ENCODE measurements at regions of chr3 and their contacts with region 1.

Region 1: GRCh38 chr3:33787328-33788009 is 11.0 kb upstream of the PDCD6IP start:
- DNase-seq: peak; percentile 50 to 88 (median 64)
- ATAC-seq: peak; percentile 85
- H3K4me3 ChIP-seq: peak overlapping the region; percentile 13; the same call in 1 of the 2 replicates
- H3K27ac ChIP-seq: no peak overlapping the region
- H3K4me1 ChIP-seq: peaks cover 10 to 37% of the 10 kb centered on the region in 2 experiments
- H3K27me3 ChIP-seq: no peaks in the 10 kb centered on the region
- CTCF ChIP-seq: peak; percentile 90 to 95 (median 91)
- EP300 ChIP-seq: no peak
- POLR2A ChIP-seq: no peak
- RAD21 ChIP-seq: peak; percentile 94 to 95

Region 2: DNA sequence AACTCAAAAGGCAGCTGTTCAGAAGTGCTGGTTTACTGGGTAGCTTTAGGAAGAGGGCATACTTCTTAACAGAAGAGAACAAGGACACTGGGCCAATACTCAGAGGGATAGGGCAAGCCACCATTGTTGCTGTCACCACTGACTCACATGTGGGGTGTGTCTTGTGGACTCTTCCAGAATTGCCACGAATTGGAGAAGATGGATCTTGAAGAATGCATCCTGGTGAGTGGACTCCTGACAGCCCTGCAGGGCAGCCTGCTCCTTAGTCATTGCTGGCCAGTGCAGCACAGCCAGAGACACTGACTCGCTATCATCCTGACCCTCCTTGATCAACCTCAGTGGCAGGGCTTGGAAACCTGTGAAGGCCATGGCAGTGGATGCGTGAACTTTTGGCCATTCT is 409.5 kb before region 1 on chr3:
- CTCF ChIA-PET with region 1: no interaction called
- POLR2A ChIA-PET with region 1: interaction called, 5 read pairs
- in situ Hi-C with region 1: no loop called
- intact Hi-C with region 1: loop called (anchors 2 kb)
- DNase-seq: no peak
- ATAC-seq: peak; percentile 25
- H3K4me3 ChIP-seq: no peak overlapping the region
- H3K27ac ChIP-seq: no peak overlapping the region
- H3K4me1 ChIP-seq: no peaks in the 10 kb centered on the region; a peak in 2 of 5 replicates
- H3K27me3 ChIP-seq: no peaks in the 10 kb centered on the region
- CTCF ChIP-seq: no peak
- EP300 ChIP-seq: no peak
- POLR2A ChIP-seq: no peak
- RAD21 ChIP-seq: no peak

Region 3: DNA sequence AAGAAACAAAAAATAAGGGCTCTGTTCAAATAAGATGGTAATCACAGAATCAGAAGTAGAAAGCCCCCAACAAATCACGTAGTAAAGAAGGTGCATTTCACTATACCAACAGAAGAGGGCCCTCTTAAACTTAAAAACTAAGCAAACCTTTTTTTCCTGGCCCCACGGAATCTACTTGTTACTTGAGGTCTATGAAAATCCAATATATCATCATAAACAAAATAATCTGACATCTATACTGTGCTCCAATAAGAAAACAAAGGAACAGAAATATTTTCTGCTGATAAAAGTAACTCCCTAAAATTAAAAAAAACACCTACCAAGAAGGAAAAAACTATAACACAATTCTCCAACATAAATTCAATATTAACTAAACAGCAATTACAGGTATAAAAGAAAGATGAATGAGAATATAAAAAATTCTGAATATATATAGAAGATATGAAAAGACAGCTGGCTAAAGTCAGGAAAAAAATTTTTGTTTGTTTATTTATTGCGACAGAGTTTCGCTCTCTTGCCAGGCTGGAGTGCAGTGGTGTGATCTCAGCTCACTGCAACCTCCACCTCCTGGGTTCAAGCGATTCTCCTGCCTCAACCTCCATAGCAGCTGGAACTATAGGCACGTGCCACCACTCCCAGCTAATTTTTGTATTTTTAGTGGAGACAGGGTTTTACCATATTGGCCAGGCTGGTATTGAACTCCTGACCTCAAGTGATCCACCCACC is 151.2 kb before region 1 on chr3:
- CTCF ChIA-PET with region 1: interaction called, 43 read pairs
- POLR2A ChIA-PET with region 1: interaction called, 4 read pairs
- in situ Hi-C with region 1: loop called (anchors 5 kb)
- intact Hi-C with region 1: loop called (anchors 1 kb)
- DNase-seq: peak; percentile 33 to 72 (median 40)
- ATAC-seq: peak; percentile 80
- H3K4me3 ChIP-seq: no peak overlapping the region
- H3K27ac ChIP-seq: no peak overlapping the region
- H3K4me1 ChIP-seq: no peaks in the 10 kb centered on the region
- H3K27me3 ChIP-seq: no peaks in the 10 kb centered on the region
- CTCF ChIP-seq: peak; percentile 60 to 83 (median 62); a peak in 5 of 6 replicates
- EP300 ChIP-seq: no peak
- POLR2A ChIP-seq: no peak
- RAD21 ChIP-seq: peak; percentile 91 to 94

Region 4: DNA sequence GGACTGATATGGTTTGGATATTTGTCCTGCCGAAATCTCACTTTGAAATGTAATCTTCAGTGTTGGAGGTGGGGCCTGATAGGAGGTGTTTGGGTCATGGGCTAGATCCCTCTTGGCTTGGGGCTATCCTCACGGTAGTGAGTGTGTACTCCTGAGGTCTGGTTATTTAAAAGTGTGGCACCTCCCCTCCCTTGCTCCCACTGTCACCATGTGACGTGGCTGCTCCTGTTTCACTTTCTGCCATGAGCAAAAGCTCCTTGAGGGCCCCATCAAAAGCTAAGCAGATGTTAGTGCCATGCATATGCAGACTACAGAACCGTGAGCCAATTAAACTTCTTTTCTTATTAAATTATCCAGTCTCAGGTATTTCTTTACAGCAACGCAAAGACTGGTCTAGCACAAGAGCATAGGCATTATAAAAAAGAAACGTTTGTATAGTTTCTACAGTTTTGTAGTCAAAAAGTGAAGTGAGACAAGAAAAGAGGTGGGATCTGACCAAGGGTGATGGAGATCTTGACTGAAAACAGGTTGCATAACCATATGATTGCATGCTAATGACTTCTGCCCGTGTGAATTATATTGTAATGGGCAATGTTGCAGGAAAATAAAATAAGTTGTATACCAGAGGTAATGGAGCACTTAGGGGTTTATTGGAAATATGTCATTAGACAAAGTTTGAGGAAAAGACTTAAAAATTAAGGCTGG is 40.9 kb before region 1 on chr3:
- CTCF ChIA-PET with region 1: no interaction called
- POLR2A ChIA-PET with region 1: no interaction called
- in situ Hi-C with region 1: no loop called
- intact Hi-C with region 1: no loop called
- DNase-seq: peak in 1 of 4 experiments; percentile 14
- ATAC-seq: peak; percentile 65
- H3K4me3 ChIP-seq: no peak overlapping the region
- H3K27ac ChIP-seq: no peak overlapping the region
- H3K4me1 ChIP-seq: peaks cover 0 to 4% of the 10 kb centered on the region in 2 experiments; a peak in 1 of 5 replicates
- H3K27me3 ChIP-seq: no peaks in the 10 kb centered on the region
- CTCF ChIP-seq: no peak
- EP300 ChIP-seq: no peak
- POLR2A ChIP-seq: no peak
- RAD21 ChIP-seq: no peak

Region 5: DNA sequence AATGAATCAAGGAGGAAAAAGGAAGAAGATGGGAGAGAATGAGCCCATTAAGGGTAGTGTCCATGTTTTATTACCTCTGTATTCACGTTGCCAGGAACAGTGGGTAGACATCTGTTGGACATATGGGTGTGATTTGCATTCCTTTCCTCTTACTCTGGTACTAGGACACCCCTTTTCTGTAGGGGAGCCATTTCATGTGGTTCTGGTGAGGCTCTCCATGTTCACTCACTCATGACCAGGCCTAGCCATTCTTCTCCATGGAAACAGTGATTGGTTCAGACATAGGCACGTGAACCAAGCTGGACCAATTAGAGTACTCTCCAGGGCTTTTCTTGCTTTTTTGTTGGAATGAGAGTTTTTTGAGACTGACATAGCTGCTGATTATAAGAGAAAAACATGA is 28.6 kb before region 1 on chr3:
- CTCF ChIA-PET with region 1: no interaction called
- POLR2A ChIA-PET with region 1: no interaction called
- in situ Hi-C with region 1: no loop called
- intact Hi-C with region 1: no loop called
- DNase-seq: no peak
- ATAC-seq: peak; percentile 70
- H3K4me3 ChIP-seq: no peak overlapping the region
- H3K27ac ChIP-seq: no peak overlapping the region
- H3K4me1 ChIP-seq: no peaks in the 10 kb centered on the region
- H3K27me3 ChIP-seq: no peaks in the 10 kb centered on the region
- CTCF ChIP-seq: no peak
- EP300 ChIP-seq: no peak
- POLR2A ChIP-seq: no peak
- RAD21 ChIP-seq: no peak

Region 6: DNA sequence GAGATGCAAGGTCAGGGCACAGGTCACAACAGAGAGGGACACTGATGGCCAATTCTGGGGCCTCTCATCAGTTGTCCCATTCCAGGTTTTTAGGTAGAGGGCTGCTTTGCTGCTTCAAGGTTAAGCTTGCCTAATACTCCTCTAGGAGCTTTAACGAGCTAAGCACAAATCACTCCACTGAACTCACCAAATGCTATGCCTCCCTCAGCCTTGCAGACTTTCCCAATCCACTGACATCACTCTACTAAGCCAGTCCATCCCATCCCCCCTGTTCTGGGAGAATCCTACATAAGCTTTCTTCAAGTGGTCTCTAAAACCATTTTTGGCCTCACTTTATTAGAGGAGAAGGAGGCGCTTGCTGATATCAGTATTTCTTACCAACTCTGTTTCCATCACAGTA is 13.8 kb before region 1 on chr3:
- CTCF ChIA-PET with region 1: no interaction called
- POLR2A ChIA-PET with region 1: interaction called, 14 read pairs
- in situ Hi-C with region 1: no loop called
- intact Hi-C with region 1: no loop called
- DNase-seq: no peak
- ATAC-seq: no peak; the same call in 2 of the 3 replicates
- H3K4me3 ChIP-seq: no peak overlapping the region
- H3K27ac ChIP-seq: no peak overlapping the region
- H3K4me1 ChIP-seq: peaks cover 0 to 13% of the 10 kb centered on the region in 2 experiments; a peak in 3 of 5 replicates
- H3K27me3 ChIP-seq: no peaks in the 10 kb centered on the region
- CTCF ChIP-seq: no peak
- EP300 ChIP-seq: no peak
- POLR2A ChIP-seq: no peak
- RAD21 ChIP-seq: no peak